ENCODE measurements at regions of chr2 and their contacts with region 1.

Region 1: GRCh38 chr2:45789961-45790723 is 138.7 kb downstream of the PRKCE start:
- DNase-seq: no peak

Region 2: GRCh38 chr2:45851613-45852304 is 61.6 kb after region 1 on chr2:
- intact Hi-C with region 1: loop called in 1 of 2 experiments (anchors 2 kb)
- DNase-seq: no peak

Measured in posterior vena cava (tissue), 2 donors.